Esophagus squamous epithelium (tissue), 5 donors: ENCODE measurements at regions of chr12 and their contacts with region 1.

Region 1: GRCh38 chr12:9797722-9798619 is 29.3 kb upstream of the KLRF1 start:
- DNase-seq: peak; percentile 5
- H3K4me3 ChIP-seq: no peak overlapping the region
- H3K27ac ChIP-seq: no peak overlapping the region
- H3K4me1 ChIP-seq: peaks cover 0 to 16% (median 0%) of the 10 kb centered on the region in 3 donors
- H3K27me3 ChIP-seq: no peaks in the 10 kb centered on the region
- CTCF ChIP-seq: peak; percentile 28 to 85 (median 62)
- POLR2A ChIP-seq: no peak

Region 2: DNA sequence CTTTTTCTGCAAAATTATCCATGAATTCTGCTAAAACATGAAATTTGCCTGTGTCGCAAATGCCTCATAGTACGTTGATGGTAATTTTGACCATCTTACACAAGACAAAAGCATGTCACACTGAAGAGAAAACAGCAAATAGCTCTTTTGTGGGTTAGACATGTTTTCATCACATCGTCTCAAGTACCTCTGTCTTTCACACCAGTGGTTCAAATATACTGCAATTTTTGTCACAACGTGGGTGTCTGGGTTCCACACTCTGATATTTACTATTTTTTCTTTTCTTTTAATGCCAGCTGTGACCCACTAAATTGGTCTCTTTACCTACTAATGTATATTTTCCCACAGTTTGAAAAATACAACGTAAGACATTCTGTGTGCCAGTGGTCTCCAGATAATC is 200.6 kb before region 1 on chr12:
- intact Hi-C with region 1: no loop called
- DNase-seq: no peak
- H3K4me3 ChIP-seq: no peak overlapping the region
- H3K27ac ChIP-seq: no peak overlapping the region
- H3K4me1 ChIP-seq: no peaks in the 10 kb centered on the region
- H3K27me3 ChIP-seq: no peaks in the 10 kb centered on the region
- CTCF ChIP-seq: no peak
- POLR2A ChIP-seq: no peak

Region 3: DNA sequence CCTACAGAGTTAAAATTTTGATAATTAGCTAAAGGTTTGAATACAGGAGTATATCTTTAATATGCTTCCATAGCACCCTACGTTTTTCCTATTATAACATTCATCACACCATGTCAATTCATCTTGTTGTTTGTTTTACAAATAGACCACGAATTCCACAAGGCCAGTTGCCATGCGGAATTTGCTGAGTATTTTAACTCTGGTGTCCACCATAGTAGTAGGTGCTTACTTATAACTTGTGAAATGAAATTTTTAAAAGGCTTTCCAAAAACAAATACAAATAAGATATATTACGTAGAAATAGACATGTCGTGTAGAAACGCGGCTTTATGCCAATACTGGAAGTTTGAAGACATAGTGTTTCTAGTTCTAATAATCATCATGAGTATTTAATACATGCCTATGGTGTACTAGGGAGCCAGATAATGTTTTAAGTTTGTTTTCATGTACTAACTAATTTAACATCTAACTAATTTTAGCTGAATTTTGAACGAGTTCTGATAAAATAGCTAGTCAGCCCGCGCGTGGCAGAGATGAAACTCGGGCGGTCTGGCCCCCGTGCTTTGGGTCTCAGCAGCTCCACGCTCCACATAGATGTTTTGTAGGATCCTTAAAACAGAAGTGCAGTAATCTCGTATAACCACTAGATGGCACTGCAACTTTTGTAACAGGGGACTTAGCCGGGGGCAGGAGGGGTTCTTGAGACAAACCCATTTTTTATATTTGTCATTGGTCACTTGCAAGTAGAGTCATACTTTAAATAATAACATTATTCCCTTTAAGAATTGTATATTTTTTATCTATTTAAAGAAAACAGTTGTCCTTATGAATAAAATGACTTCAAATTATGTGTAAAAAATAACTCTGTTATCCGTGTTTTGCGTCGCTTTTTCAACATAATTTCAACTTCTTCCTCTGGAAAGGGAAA is 47.4 kb before region 1 on chr12:
- intact Hi-C with region 1: loop called (anchors 5 kb)
- DNase-seq: no peak
- H3K4me3 ChIP-seq: peak overlapping the region in 3 of 4 donors; percentile 3 to 39 (median 6)
- H3K27ac ChIP-seq: no peak overlapping the region
- H3K4me1 ChIP-seq: peaks cover 0 to 12% (median 0%) of the 10 kb centered on the region in 3 donors
- H3K27me3 ChIP-seq: no peaks in the 10 kb centered on the region
- CTCF ChIP-seq: peak; percentile 82 to 88 (median 84)
- POLR2A ChIP-seq: no peak

Region 4: DNA sequence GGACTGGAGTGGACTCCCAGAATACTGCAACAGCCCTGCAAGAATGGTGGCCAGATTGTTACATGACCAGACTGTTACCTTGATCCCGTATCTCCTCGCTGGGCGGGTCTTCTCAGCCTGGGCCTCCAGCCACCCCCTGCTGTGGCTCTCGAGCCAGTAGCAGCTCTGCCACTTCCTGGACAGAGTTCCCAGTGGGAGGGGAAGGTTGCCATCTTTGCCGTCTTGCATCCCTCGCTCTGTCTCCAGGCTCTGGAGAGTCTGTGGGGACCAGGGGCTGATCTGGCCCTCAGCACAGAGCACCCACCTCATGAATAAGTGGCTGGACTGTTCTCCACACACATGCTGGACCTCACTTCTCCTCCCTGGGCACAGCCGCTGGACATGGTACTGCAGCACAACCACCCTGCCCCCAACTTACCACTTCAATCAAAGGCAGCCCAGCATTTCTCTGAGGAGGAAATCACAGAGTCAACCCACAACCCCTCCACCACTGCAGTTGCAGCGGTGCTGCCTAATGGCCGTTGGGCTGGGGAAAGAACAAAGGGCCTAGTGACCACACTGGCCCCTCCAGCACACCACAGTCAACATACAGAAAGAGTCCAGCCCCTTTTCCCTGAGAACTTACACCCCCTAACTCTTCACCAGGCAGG is 22.4 kb after region 1 on chr12:
- intact Hi-C with region 1: no loop called
- DNase-seq: no peak
- H3K4me3 ChIP-seq: no peak overlapping the region
- H3K27ac ChIP-seq: no peak overlapping the region
- H3K4me1 ChIP-seq: no peaks in the 10 kb centered on the region
- H3K27me3 ChIP-seq: peaks cover 0 to 14% (median 0%) of the 10 kb centered on the region in 4 donors
- CTCF ChIP-seq: no peak
- POLR2A ChIP-seq: no peak

Region 5: GRCh38 chr12:9851927-9852326 is 54.0 kb after region 1 on chr12:
- intact Hi-C with region 1: no loop called
- DNase-seq: no peak
- H3K4me3 ChIP-seq: no peak overlapping the region
- H3K27ac ChIP-seq: no peak overlapping the region
- H3K4me1 ChIP-seq: no peaks in the 10 kb centered on the region
- H3K27me3 ChIP-seq: no peaks in the 10 kb centered on the region
- CTCF ChIP-seq: no peak
- POLR2A ChIP-seq: no peak